ENCODE measurements at regions of chr3 and their contacts with region 1.

Region 1: DNA sequence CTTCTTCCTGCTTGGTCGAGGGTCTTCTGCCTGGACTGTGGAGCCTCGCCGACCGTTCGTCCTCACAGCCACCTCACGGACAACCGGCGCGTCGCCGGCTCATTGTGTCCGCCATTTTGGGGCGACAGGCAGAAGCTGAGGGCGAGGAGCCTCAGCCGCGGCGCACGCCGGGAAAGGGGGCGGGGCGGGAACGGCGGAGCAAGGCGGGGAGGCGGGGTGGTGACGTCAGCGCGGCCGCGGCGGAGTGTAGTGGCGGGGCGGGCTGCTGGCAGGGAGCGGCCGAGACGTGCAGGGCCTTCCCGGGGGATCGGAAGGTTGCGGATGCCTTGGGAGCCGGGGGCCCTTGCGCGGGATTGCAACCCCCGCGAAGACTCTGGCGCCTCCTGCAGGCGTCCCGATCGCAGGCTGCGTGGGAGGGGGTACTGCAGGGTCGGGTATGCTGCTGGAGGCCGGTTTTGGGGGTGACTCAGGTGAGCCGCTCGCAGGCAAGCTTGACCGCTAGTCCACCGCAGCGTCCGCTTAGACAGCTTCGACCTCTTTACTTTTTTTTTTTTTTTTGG is at the start of gene WDR82:
- DNase-seq: peak; percentile 95 to 96
- ATAC-seq: peak; percentile 87 to 90
- H3K4me3 ChIP-seq: peak within 1 kb of the TSS; percentile 66 to 95 (median 82)
- H3K27ac ChIP-seq: peak within 1 kb of the TSS; percentile 89 to 97 (median 94)
- H3K4me1 ChIP-seq: peaks cover 52 to 58% of the 10 kb centered on the region in 2 donors
- H3K27me3 ChIP-seq: no peaks in the 10 kb centered on the region
- CTCF ChIP-seq: peak; percentile 40 to 68 (median 59)
- POLR2A ChIP-seq: peak; percentile 82 to 88
- total RNA-seq, gene WDR82: 54.1 to 64.9 (median 59.3) TPM

Region 2: DNA sequence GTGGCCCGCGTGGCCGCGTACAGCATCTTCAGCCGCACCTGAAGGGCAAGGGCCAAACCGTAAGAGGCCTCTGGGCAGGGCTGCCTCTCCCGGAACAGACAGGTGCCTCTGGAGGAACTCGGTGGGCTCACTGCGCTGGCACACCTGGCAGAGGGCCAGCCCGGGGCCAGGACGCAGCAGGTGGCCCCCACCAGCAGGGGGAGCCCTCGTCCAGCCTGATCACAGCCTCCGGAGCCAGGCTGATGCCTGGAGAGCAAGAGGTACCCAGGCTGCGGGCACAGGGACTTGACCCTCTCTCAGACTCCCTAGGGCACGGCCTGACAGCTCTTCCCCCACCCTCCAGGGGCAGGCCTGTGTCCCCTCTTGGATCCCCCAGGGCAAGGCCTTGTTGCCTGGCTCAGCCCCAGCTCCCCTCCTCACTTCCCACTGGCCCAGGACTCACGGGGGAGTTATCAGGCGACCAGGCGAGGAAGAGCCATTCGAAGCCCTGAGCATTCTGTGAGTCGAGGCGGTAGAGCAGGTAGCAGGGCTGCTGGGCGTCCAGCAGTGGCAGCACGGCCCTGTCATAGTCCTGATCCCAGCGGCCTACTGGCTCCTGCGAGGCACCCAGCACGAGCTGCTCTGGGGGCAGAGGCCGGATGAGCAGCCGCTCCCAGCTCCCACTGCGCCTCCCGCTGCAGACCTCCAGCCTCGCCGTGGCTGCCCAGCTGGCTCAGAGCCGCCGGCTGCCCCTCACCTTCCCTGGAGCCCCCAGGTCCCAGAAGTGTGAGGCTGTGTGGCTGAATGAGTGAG is 46.9 kb before region 1 on chr3:
- in situ Hi-C with region 1: loop called in 2 of 4 experiments (anchors 5 kb)
- intact Hi-C with region 1: loop called (anchors 1 kb)
- DNase-seq: peak; percentile 71 to 82
- ATAC-seq: peak; percentile 20 to 22
- H3K4me3 ChIP-seq: peak overlapping the region; percentile 70 to 83 (median 70)
- H3K27ac ChIP-seq: peak overlapping the region; percentile 99 to 100 (median 100)
- H3K4me1 ChIP-seq: peaks cover 36 to 43% of the 10 kb centered on the region in 2 donors
- H3K27me3 ChIP-seq: no peaks in the 10 kb centered on the region
- CTCF ChIP-seq: peak; percentile 89 to 99 (median 97)
- POLR2A ChIP-seq: no peak

Region 3: DNA sequence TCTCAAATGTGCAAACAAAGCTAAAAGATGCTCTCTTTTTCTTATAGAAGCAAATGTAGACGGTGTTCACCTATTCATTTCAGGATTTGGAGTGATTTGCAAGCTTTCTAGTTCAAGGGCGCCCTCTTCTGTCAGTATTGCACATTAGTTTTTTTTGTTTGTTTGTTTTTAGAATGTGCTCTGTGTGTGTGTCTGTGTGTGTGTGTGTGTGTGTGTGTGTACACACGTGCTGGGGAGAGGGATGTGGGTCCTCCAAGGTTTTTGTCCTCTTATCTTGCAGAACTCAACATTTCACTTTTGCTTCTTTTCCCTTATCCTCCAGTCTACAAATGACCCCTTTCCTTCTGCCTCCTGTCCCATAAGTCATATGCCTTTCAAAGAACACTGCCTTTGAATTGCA is 61.0 kb after region 1 on chr3:
- in situ Hi-C with region 1: no loop called
- intact Hi-C with region 1: no loop called
- DNase-seq: no peak
- ATAC-seq: peak; percentile 69 to 91
- H3K4me3 ChIP-seq: no peak overlapping the region
- H3K27ac ChIP-seq: no peak overlapping the region
- H3K4me1 ChIP-seq: no peaks in the 10 kb centered on the region
- H3K27me3 ChIP-seq: no peaks in the 10 kb centered on the region
- CTCF ChIP-seq: peak; percentile 57 to 75 (median 70)
- POLR2A ChIP-seq: no peak

Region 4: DNA sequence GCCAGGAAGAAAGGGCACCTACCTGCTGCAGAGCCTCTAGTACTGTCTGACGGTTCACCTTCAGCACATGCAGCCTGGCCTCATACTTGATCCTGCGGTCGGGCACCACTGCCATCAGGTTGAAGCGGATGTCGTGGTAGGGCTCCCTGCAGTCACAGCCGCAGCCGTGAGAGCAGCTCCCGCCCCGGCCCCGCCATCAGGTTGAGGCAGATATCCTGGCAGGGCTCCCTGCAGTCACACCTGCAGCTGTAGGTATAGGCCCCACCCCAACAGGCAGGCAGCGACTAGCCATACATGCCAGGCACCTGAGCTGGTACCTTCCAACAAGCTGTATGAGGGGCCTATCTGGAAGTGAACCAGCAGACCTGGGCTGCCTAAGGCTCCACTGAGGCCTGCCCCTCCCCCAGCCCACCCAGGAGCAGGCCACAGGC is 127.7 kb after region 1 on chr3:
- in situ Hi-C with region 1: no loop called
- intact Hi-C with region 1: loop called (anchors 5 kb)
- DNase-seq: no peak
- ATAC-seq: no peak
- H3K4me3 ChIP-seq: no peak overlapping the region
- H3K27ac ChIP-seq: no peak overlapping the region
- H3K4me1 ChIP-seq: peaks cover 15 to 27% of the 10 kb centered on the region in 2 donors
- H3K27me3 ChIP-seq: no peaks in the 10 kb centered on the region
- CTCF ChIP-seq: no peak
- POLR2A ChIP-seq: no peak

Region 5: GRCh38 chr3:52455283-52456168 is 176.9 kb after region 1 on chr3 and contains the start of gene NISCH:
- in situ Hi-C with region 1: no loop called
- intact Hi-C with region 1: loop called (anchors 10 kb)
- DNase-seq: peak; percentile 82 to 90
- ATAC-seq: peak; percentile 43 to 61
- H3K4me3 ChIP-seq: peak within 1 kb of the TSS; percentile 73 to 95 (median 86)
- H3K27ac ChIP-seq: peak within 1 kb of the TSS; percentile 94 to 99 (median 97)
- H3K4me1 ChIP-seq: peaks cover 38 to 39% of the 10 kb centered on the region in 2 donors
- H3K27me3 ChIP-seq: no peaks in the 10 kb centered on the region
- CTCF ChIP-seq: no peak
- POLR2A ChIP-seq: peak; percentile 73 to 76
- total RNA-seq, gene NISCH: 19.2 to 38.3 (median 25.0) TPM